ENCODE measurements at regions of chr4 and their contacts with region 1.

Region 1: DNA sequence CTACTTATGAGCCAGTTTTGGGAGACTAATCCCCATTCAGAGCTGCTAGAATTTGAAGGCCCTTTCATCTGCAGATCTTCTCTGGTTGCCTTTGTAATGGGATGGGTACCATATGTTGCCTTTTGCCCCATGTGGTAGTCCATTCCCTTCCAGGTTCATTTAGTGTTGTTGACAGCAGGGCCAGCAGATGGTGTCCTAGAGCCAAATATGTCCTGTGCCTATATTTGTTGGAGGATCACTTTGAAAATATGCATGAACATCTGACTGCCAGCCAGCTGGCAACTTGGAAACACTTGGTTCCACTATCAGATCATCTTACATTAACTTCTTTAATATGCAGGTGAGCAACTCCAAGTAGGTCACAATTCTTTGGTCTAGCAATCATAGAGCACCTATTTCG is 30.4 kb downstream of the CFAP299 start:
- DNase-seq: no peak
- ATAC-seq: 0 out of 2 replicates have a peak, but pooled peaks have one; percentile 60
- H3K4me3 ChIP-seq: no peak overlapping the region
- H3K27ac ChIP-seq: no peak overlapping the region
- H3K4me1 ChIP-seq: no peaks in the 10 kb centered on the region
- H3K27me3 ChIP-seq: no peaks in the 10 kb centered on the region
- CTCF ChIP-seq: peak; percentile 71

Region 2: DNA sequence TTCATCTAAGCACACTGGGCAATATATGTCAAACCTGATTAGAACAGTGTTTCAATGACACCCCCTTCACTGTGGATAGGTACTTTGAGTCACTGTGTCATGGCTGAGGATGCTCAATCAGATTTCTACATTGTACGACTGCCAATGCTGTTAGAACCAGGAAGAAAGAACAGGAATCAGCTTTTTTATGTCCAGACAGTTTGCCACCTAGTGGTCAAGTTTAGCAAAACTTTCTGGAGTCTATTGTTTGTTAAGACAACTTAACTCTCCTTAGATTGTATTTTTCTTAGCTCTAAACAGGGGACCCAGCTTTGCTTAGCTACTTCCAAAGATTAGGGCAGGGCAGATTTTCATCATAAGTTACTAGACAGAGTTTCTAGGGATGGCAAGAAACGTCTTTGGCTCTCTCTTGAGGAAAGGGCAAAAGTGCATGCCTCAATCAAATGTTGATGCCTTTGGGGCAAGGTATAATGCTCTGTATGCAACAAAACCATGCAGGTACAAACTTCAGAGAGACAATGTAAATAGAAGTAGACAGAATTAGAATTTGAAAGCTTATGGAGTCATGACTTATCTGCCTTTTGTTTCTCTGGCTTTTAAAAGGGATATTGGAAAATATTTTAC is 624.1 kb after region 1 on chr4:
- CTCF ChIA-PET with region 1: interaction called, 4 read pairs
- POLR2A ChIA-PET with region 1: no interaction called
- in situ Hi-C with region 1: no loop called
- intact Hi-C with region 1: loop called (anchors 2 kb)
- DNase-seq: peak; percentile 20
- ATAC-seq: no peak
- H3K4me3 ChIP-seq: no peak overlapping the region
- H3K27ac ChIP-seq: no peak overlapping the region
- H3K4me1 ChIP-seq: no peaks in the 10 kb centered on the region
- H3K27me3 ChIP-seq: no peaks in the 10 kb centered on the region
- CTCF ChIP-seq: peak; percentile 62

Region 3: GRCh38 chr4:81052119-81053068 is 686.5 kb after region 1 on chr4:
- CTCF ChIA-PET with region 1: no interaction called
- POLR2A ChIA-PET with region 1: no interaction called
- in situ Hi-C with region 1: no loop called
- intact Hi-C with region 1: loop called (anchors 2 kb)
- DNase-seq: no peak
- ATAC-seq: peak; percentile 76; the same call in 1 of the 2 replicates
- H3K4me3 ChIP-seq: no peak overlapping the region
- H3K27ac ChIP-seq: no peak overlapping the region
- H3K4me1 ChIP-seq: no peaks in the 10 kb centered on the region
- H3K27me3 ChIP-seq: no peaks in the 10 kb centered on the region
- CTCF ChIP-seq: peak; percentile 75